IMR-90 (cell line): ENCODE measurements at regions of chr11 and their contacts with region 1.

Region 1: DNA sequence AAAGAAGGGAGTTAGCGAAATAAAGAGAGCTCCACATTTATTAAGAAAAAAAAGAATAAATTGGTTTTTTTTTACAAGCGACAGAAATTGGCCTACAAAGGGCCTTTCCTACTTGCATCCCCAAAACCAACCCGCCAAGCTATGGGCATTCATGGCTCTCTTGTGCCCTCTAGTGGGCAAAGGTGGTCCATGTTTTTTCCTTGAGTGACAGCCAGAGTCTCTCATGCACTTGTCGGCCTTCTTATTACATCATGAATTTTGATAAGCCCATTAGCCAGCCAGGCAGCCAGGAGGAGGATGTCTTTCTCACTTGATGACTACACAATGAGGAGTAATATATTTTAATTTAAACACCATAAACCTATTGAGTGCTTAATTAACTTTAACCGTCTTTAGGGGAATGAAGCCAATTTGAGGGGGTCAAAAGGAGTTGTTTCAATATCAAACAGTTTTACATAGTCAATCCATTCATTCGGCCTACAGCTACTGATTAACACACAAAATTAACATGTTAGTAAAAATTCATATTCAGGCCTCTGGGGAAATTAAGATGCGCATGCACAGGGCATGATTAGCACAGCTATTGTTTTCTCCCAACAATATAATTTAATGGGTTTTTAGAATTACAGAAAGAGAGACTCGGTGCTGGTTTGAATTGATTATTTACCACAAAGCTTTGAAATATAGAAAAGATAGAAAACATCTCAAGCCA is 85.5 kb downstream of the RCN1 start:
- DNase-seq: peak; percentile 76
- ATAC-seq: peak; percentile 62; the same call in 1 of the 2 replicates
- H3K4me3 ChIP-seq: no peak overlapping the region
- H3K27ac ChIP-seq: no peak overlapping the region
- H3K4me1 ChIP-seq: no peaks in the 10 kb centered on the region
- H3K27me3 ChIP-seq: peaks cover 11% of the 10 kb centered on the region
- CTCF ChIP-seq: peak; percentile 96
- POLR2A ChIP-seq: no peak
- RAD21 ChIP-seq: peak; percentile 95

Region 2: GRCh38 chr11:31240338-31240904 is 936.0 kb before region 1 on chr11:
- CTCF ChIA-PET with region 1: no interaction called
- POLR2A ChIA-PET with region 1: no interaction called
- dilution Hi-C with region 1: no loop called
- in situ Hi-C with region 1: loop called (anchors 25 kb)
- intact Hi-C with region 1: loop called (anchors 1 kb)
- DNase-seq: peak; percentile 33
- ATAC-seq: no peak; the same call in 1 of the 2 replicates
- H3K4me3 ChIP-seq: no peak overlapping the region
- H3K27ac ChIP-seq: no peak overlapping the region
- H3K4me1 ChIP-seq: no peaks in the 10 kb centered on the region
- H3K27me3 ChIP-seq: no peaks in the 10 kb centered on the region
- CTCF ChIP-seq: peak; percentile 45
- POLR2A ChIP-seq: no peak
- RAD21 ChIP-seq: peak; percentile 43; the same call in 1 of the 2 replicates

Region 3: DNA sequence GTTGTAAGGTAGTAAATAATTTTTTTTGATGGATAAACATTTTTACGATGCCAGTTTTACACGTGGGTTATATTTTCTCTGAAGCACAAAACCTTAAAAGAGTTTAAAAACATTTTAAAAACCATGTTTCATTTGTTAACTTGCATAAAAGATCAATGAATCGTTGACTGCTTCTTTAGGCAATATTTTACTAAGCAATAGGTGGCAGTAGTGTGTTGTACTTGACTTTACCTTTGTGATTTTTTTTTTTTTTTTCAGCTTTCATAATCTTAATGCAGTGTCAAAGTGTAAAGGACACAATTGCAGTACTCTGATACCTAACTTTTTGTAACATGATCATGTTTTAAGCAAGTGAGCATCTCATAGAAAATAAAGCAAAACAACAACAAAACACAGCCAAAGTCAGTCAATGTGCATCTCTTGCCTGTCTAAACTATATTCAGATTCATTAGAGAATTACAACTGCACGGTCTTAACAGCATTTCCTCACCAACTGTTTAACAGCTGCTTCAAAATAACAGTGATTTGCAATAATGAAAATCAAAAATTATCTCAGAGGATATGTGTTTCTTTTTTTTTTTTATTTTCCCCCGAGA is 779.0 kb before region 1 on chr11:
- CTCF ChIA-PET with region 1: no interaction called
- POLR2A ChIA-PET with region 1: no interaction called
- dilution Hi-C with region 1: no loop called
- in situ Hi-C with region 1: no loop called
- intact Hi-C with region 1: loop called (anchors 5 kb)
- DNase-seq: peak; percentile 22
- ATAC-seq: peak; percentile 54; the same call in 1 of the 2 replicates
- H3K4me3 ChIP-seq: no peak overlapping the region
- H3K27ac ChIP-seq: no peak overlapping the region
- H3K4me1 ChIP-seq: no peaks in the 10 kb centered on the region
- H3K27me3 ChIP-seq: no peaks in the 10 kb centered on the region
- CTCF ChIP-seq: peak; percentile 74
- POLR2A ChIP-seq: no peak
- RAD21 ChIP-seq: peak; percentile 77

Region 4: GRCh38 chr11:31641477-31642062 is 534.8 kb before region 1 on chr11:
- CTCF ChIA-PET with region 1: no interaction called
- POLR2A ChIA-PET with region 1: no interaction called
- dilution Hi-C with region 1: no loop called
- in situ Hi-C with region 1: no loop called
- intact Hi-C with region 1: loop called (anchors 2 kb)
- DNase-seq: peak; percentile 36
- ATAC-seq: no peak
- H3K4me3 ChIP-seq: no peak overlapping the region
- H3K27ac ChIP-seq: no peak overlapping the region
- H3K4me1 ChIP-seq: no peaks in the 10 kb centered on the region
- H3K27me3 ChIP-seq: no peaks in the 10 kb centered on the region
- CTCF ChIP-seq: peak; percentile 46
- POLR2A ChIP-seq: no peak
- RAD21 ChIP-seq: peak; percentile 41

Region 5: GRCh38 chr11:32052218-32052617 is 124.2 kb before region 1 on chr11:
- CTCF ChIA-PET with region 1: interaction called, 24 read pairs
- POLR2A ChIA-PET with region 1: no interaction called
- dilution Hi-C with region 1: loop called (anchors 25 kb)
- in situ Hi-C with region 1: loop called (anchors 5 kb)
- intact Hi-C with region 1: loop called (anchors 1 kb)
- DNase-seq: peak; percentile 58
- ATAC-seq: peak; percentile 81
- H3K4me3 ChIP-seq: no peak overlapping the region
- H3K27ac ChIP-seq: no peak overlapping the region
- H3K4me1 ChIP-seq: no peaks in the 10 kb centered on the region
- H3K27me3 ChIP-seq: peaks cover 63% of the 10 kb centered on the region
- CTCF ChIP-seq: peak; percentile 86
- POLR2A ChIP-seq: no peak
- RAD21 ChIP-seq: peak; percentile 84

Region 6: GRCh38 chr11:32297611-32298011 is 121.2 kb after region 1 on chr11:
- CTCF ChIA-PET with region 1: no interaction called
- POLR2A ChIA-PET with region 1: no interaction called
- dilution Hi-C with region 1: no loop called
- in situ Hi-C with region 1: no loop called
- intact Hi-C with region 1: loop called (anchors 1 kb)
- DNase-seq: peak; percentile 36
- ATAC-seq: peak; percentile 71
- H3K4me3 ChIP-seq: no peak overlapping the region
- H3K27ac ChIP-seq: no peak overlapping the region
- H3K4me1 ChIP-seq: no peaks in the 10 kb centered on the region
- H3K27me3 ChIP-seq: peaks cover 2% of the 10 kb centered on the region; the same call in 1 of the 2 replicates
- CTCF ChIP-seq: peak; percentile 41
- POLR2A ChIP-seq: no peak
- RAD21 ChIP-seq: peak; percentile 25; the same call in 1 of the 2 replicates